SK-N-SH (cell line): ENCODE measurements at regions of chr1 and their contacts with region 1.

Region 1: GRCh38 chr1:155091071-155091709 is 12.6 kb downstream of the EFNA3 start:
- DNase-seq: peak; percentile 88
- H3K4me3 ChIP-seq: peak overlapping the region in 1 of 2 experiments; percentile 23; a peak in 1 of 4 replicates
- H3K27ac ChIP-seq: no peak overlapping the region
- H3K4me1 ChIP-seq: peaks cover 0 to 30% of the 10 kb centered on the region in 2 experiments; a peak in 1 of 4 replicates
- H3K27me3 ChIP-seq: no peaks in the 10 kb centered on the region
- CTCF ChIP-seq: peak; percentile 91
- EP300 ChIP-seq: no peak
- RAD21 ChIP-seq: peak; percentile 78

Region 2: GRCh38 chr1:154831462-154831861 is 259.7 kb before region 1 on chr1:
- CTCF ChIA-PET with region 1: no interaction called
- POLR2A ChIA-PET with region 1: no interaction called
- DNase-seq: no peak
- H3K4me3 ChIP-seq: no peak overlapping the region
- H3K27ac ChIP-seq: no peak overlapping the region
- H3K4me1 ChIP-seq: peaks cover 0 to 38% of the 10 kb centered on the region in 2 experiments; a peak in 1 of 4 replicates
- H3K27me3 ChIP-seq: no peaks in the 10 kb centered on the region; the same call in 1 of the 2 replicates
- CTCF ChIP-seq: no peak
- EP300 ChIP-seq: no peak
- RAD21 ChIP-seq: no peak

Region 3: DNA sequence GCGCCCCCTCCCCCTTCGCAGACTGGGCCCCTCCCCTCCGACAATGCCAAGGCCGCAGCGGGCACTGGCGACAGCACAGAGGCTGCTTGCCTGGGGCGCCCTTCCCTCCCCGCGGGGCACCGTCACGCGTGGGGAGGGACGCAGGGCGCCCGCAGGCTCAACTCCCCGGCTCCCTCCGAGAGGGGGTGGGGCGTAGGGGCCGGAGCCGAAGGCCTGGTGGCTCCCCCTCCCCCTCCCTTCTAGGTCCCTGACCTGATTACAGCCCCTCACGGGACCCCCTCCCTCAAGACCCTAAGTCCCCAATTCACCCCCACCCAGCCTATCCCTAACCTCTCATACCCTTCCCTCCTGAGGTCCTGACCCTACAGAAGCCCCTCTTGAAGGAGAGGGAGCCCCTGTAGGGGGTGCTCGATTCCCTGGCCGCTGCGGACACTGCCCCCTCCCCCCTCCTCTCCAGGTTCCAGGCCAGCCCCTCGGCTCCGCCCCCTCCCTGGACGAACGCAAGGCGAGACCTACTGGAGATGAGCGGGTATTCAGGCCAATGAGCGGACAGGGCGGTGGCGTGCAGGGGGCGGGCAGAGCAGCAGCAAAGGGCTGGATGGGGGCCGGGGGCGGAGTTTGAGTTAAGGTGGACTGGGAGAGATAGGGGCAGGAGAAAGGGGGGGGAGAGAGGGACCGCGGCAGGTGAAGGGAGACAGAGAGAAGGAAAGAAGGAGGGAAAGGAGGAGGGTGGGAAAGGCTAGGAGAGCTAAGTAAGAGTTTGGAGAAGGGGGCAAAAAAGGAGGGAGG is 89.3 kb before region 1 on chr1:
- CTCF ChIA-PET with region 1: interaction called, 10 read pairs
- POLR2A ChIA-PET with region 1: no interaction called
- DNase-seq: peak; percentile 96
- H3K4me3 ChIP-seq: peak overlapping the region; percentile 57 to 71
- H3K27ac ChIP-seq: peak overlapping the region; percentile 92 to 96
- H3K4me1 ChIP-seq: peaks cover 19 to 33% of the 10 kb centered on the region in 2 experiments
- H3K27me3 ChIP-seq: no peaks in the 10 kb centered on the region
- CTCF ChIP-seq: peak; percentile 69
- EP300 ChIP-seq: no peak
- RAD21 ChIP-seq: no peak

Region 4: DNA sequence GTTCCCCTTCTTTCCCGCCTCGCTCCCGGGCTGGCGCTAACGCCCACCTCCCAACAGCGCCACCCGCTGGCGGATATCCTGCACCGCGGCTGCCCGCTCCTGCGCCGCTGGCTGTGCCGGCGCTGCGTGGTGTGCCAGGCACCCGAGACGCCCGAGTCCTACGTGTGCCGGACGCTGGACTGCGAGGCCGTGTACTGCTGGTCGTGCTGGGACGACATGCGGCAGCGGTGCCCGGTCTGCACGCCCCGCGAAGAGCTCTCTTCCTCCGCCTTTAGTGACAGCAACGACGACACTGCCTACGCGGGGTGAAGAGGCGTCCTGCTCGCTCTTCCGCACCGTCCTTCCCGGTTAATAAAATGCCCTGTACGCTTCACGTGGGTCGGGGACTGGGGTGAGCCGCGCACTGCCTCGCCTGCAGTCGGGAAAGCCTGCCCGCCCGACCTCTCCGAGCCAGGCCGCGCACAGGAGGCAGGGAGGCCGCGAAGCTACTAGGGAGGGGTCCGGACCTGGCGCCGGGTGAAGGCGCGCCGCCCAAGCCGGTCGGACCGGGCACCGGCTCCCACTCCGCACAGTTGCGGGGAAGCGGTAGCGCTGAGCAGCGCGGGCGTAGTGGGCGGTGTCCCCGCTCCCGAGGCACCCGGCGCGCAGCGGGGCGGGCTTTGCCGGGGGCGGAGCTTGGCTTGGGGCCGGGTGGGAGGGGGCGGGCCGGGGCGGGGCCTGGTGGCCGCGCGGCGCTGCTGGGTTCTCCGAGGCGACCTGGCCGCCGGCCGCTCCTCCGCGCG is 40.4 kb before region 1 on chr1 and contains the start of gene ADAM15:
- CTCF ChIA-PET with region 1: interaction called, 129 read pairs
- POLR2A ChIA-PET with region 1: no interaction called
- DNase-seq: peak; percentile 99
- H3K4me3 ChIP-seq: peak within 1 kb of the TSS; percentile 84 to 98
- H3K27ac ChIP-seq: peak within 1 kb of the TSS; percentile 61 to 92
- H3K4me1 ChIP-seq: peaks cover 7 to 42% of the 10 kb centered on the region in 2 experiments
- H3K27me3 ChIP-seq: no peaks in the 10 kb centered on the region
- CTCF ChIP-seq: peak; percentile 88
- EP300 ChIP-seq: no peak
- RAD21 ChIP-seq: peak; percentile 40
- polyA plus RNA-seq, gene ADAM15: 60.1 and 64.1 TPM in 2 replicates

Region 5: DNA sequence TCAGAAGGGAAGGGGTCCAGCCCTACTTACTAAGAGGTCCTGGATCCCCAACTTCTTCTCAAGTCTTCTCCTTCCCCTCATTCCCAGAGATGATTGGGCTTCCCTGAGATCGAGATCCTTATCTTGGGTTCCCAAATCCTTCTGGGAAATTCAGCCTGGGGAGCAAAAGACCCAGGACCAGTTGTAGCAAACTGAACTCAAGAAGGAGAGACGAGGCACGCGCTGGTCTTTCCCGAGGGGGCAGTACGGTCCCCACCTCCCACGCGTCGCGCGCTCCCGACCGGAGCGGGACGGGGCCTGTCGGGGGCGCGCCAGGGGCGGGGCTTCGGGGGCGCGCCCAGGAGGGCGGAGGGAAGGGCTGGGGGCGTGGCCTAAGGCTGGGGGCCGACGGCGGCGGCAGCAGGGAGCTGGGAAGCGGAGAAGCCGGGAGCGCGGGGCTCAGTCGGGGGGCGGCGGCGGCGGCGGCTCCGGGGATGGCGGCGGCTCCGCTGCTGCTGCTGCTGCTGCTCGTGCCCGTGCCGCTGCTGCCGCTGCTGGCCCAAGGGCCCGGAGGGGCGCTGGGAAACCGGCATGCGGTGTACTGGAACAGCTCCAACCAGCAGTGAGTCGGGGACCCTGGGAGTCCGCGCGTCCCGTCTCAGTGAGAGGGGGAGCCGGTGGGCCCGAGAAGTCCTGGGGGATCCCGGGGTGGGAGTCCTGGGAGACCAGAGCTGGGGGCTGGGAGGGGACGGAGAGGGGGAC is 12.6 kb before region 1 on chr1 and contains the start of gene EFNA3:
- CTCF ChIA-PET with region 1: interaction called, 12 read pairs
- POLR2A ChIA-PET with region 1: no interaction called
- DNase-seq: peak; percentile 98
- H3K4me3 ChIP-seq: peak within 1 kb of the TSS; percentile 55 to 62
- H3K27ac ChIP-seq: no peak within 1 kb of the TSS; a peak in 1 of 4 replicates
- H3K4me1 ChIP-seq: peaks cover 15 to 16% of the 10 kb centered on the region in 2 experiments; a peak in 2 of 4 replicates
- H3K27me3 ChIP-seq: peaks cover 23% of the 10 kb centered on the region
- CTCF ChIP-seq: no peak
- EP300 ChIP-seq: no peak
- RAD21 ChIP-seq: no peak
- polyA plus RNA-seq, gene EFNA3: 5.5 and 6.0 TPM in 2 replicates

Region 6: GRCh38 chr1:155120253-155120652 is 29.1 kb after region 1 on chr1:
- CTCF ChIA-PET with region 1: interaction called, 21 read pairs
- POLR2A ChIA-PET with region 1: no interaction called
- DNase-seq: no peak
- H3K4me3 ChIP-seq: no peak overlapping the region
- H3K27ac ChIP-seq: no peak overlapping the region
- H3K4me1 ChIP-seq: peaks cover 0 to 9% of the 10 kb centered on the region in 2 experiments; a peak in 1 of 4 replicates
- H3K27me3 ChIP-seq: no peaks in the 10 kb centered on the region; the same call in 1 of the 2 replicates
- CTCF ChIP-seq: no peak
- EP300 ChIP-seq: no peak
- RAD21 ChIP-seq: no peak

Region 7: GRCh38 chr1:155135415-155136028 is 44.3 kb after region 1 on chr1 and contains the start of gene SLC50A1:
- CTCF ChIA-PET with region 1: interaction called, 48 read pairs
- POLR2A ChIA-PET with region 1: interaction called, 4 read pairs
- DNase-seq: peak; percentile 97
- H3K4me3 ChIP-seq: peak within 1 kb of the TSS; percentile 72 to 73
- H3K27ac ChIP-seq: peak within 1 kb of the TSS; percentile 96 to 98
- H3K4me1 ChIP-seq: peaks cover 6 to 38% of the 10 kb centered on the region in 2 experiments; a peak in 3 of 4 replicates
- H3K27me3 ChIP-seq: no peaks in the 10 kb centered on the region
- CTCF ChIP-seq: no peak; the same call in 1 of the 2 replicates
- EP300 ChIP-seq: no peak; a peak in 1 of 4 replicates
- RAD21 ChIP-seq: no peak
- polyA plus RNA-seq, gene SLC50A1: 58.4 and 71.1 TPM in 2 replicates

Region 8: GRCh38 chr1:155172732-155173477 is 81.7 kb after region 1 on chr1 and contains the start of gene KRTCAP2:
- CTCF ChIA-PET with region 1: interaction called, 496 read pairs
- POLR2A ChIA-PET with region 1: interaction called, 8 read pairs
- DNase-seq: peak; percentile 94
- H3K4me3 ChIP-seq: peak within 1 kb of the TSS; percentile 75 to 93
- H3K27ac ChIP-seq: peak within 1 kb of the TSS; percentile 92
- H3K4me1 ChIP-seq: peaks cover 0 to 33% of the 10 kb centered on the region in 2 experiments; a peak in 3 of 4 replicates
- H3K27me3 ChIP-seq: no peaks in the 10 kb centered on the region
- CTCF ChIP-seq: peak; percentile 91
- EP300 ChIP-seq: no peak
- RAD21 ChIP-seq: no peak
- polyA plus RNA-seq, gene KRTCAP2: 203 and 238 TPM in 2 replicates

Region 9: GRCh38 chr1:155273343-155274245 is 182.4 kb after region 1 on chr1 and contains the start of gene CLK2:
- CTCF ChIA-PET with region 1: no interaction called
- POLR2A ChIA-PET with region 1: no interaction called
- DNase-seq: peak; percentile 98
- H3K4me3 ChIP-seq: peak within 1 kb of the TSS; percentile 72 to 94
- H3K27ac ChIP-seq: peak within 1 kb of the TSS; percentile 86 to 93
- H3K4me1 ChIP-seq: peaks cover 3 to 22% of the 10 kb centered on the region in 2 experiments; a peak in 2 of 4 replicates
- H3K27me3 ChIP-seq: no peaks in the 10 kb centered on the region
- CTCF ChIP-seq: no peak
- EP300 ChIP-seq: no peak
- RAD21 ChIP-seq: no peak
- polyA plus RNA-seq, gene CLK2: 76.7 and 81.8 TPM in 2 replicates